ENCODE measurements at regions of chr18 and their contacts with region 1.

Region 1: DNA sequence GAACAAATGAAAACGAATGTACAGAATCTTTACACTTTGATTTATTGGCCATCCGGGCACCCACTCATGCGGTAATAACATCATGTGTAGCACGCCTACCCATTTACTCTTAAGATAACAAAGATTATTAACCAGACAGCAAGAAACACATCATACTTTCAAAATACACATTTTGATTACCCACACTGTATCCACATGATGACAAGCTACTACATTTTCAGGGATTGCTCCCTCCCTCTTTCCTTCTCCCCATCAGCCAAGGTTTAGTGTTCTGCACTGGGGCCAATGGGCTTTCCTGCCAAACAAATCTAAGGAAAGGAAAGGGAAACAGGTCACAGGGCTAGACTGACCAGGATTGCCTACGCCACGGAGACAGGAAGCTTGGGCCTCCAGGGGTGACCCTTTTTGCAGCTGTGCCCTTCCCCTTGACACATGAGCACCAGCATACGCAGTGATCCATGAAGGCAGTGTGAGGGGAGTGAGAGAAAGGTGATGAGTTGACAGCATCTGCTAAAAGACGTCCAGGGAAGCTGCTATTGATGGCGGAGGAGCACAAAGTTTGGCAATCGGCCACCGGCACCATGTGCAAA is 76.5 kb downstream of the ZNF521 start:
- DNase-seq: no peak
- ATAC-seq: no peak
- H3K4me3 Mint-ChIP-seq: no peak overlapping the region
- H3K27ac Mint-ChIP-seq: no peak overlapping the region
- H3K4me1 Mint-ChIP-seq: no peaks in the 10 kb centered on the region
- H3K27me3 Mint-ChIP-seq: peaks cover 4% of the 10 kb centered on the region
- CTCF ChIP-seq: no peak

Region 2: GRCh38 chr18:25253136-25253535 is 22.4 kb before region 1 on chr18:
- CTCF ChIA-PET with region 1: no interaction called
- POLR2A ChIA-PET with region 1: no interaction called
- intact Hi-C with region 1: loop called (anchors 2 kb)
- DNase-seq: no peak
- ATAC-seq: no peak
- H3K4me3 Mint-ChIP-seq: no peak overlapping the region
- H3K27ac Mint-ChIP-seq: no peak overlapping the region
- H3K4me1 Mint-ChIP-seq: no peaks in the 10 kb centered on the region
- H3K27me3 Mint-ChIP-seq: peaks cover 2% of the 10 kb centered on the region
- CTCF ChIP-seq: no peak

Region 3: GRCh38 chr18:25843791-25844190 is 568.3 kb after region 1 on chr18:
- CTCF ChIA-PET with region 1: no interaction called
- POLR2A ChIA-PET with region 1: no interaction called
- intact Hi-C with region 1: no loop called
- DNase-seq: no peak
- ATAC-seq: no peak
- H3K4me3 Mint-ChIP-seq: no peak overlapping the region
- H3K27ac Mint-ChIP-seq: no peak overlapping the region
- H3K4me1 Mint-ChIP-seq: no peaks in the 10 kb centered on the region
- H3K27me3 Mint-ChIP-seq: peaks cover 9% of the 10 kb centered on the region
- CTCF ChIP-seq: no peak

Measured in activated B cell treated with CpG ODN at 0.5 μM for 24 hours (primary cell).